Activated T-helper 2 cell treated with anti-CD3 and anti-CD28 coated beads, Interferon-gamma antibody, Interleukin-2, Interleukin-4, amounts not matched to agents 10 μg/mL and 5 μg/mL and 100 μg/mL, durations not matched to agents 14 hours and 24 hours and 36 hours (primary cell): ENCODE measurements at regions of chr1 and their contacts with region 1.

Region 1: GRCh38 chr1:32498751-32499150 is 33.9 kb downstream of the ZBTB8B start:
- DNase-seq: no peak
- H3K4me3 Mint-ChIP-seq: peak overlapping the region; percentile 17
- H3K27ac Mint-ChIP-seq: no peak overlapping the region
- H3K4me1 Mint-ChIP-seq: peaks cover 7% of the 10 kb centered on the region
- H3K27me3 Mint-ChIP-seq: peaks cover 42% of the 10 kb centered on the region

Region 2: DNA sequence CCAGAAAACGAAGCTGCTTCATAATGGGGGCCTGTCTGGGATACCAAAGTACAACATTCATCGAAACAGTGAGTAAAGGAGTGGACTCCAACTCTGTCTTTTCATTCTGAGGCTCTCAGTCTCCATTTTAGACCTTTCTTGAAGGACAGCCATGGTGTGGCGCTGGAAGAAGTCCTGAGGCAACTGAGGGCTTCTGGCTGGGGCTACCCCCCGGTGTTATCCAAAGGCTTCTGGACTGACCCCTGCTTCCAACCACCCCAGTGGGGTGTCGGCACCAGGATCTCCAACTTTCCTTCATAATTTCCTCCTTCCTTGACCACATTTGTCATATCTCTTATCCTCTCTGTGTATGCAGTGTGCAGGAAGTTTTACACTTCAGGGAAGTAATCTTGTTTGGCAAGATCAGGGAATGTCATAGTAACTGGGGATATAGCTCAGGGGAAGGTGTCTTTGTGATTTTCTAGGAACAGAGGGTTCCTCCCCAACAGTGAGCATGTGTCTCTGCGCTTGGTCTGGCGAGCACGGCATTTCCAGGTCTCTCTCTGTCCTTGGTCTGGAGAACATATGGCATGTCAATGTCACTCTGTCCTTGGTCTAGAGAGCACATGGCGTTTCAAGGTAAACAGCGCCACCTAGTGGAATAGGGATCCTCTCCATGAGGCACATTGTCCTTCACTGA is 85.1 kb before region 1 on chr1:
- intact Hi-C with region 1: no loop called
- DNase-seq: peak; percentile 63
- H3K4me3 Mint-ChIP-seq: no peak overlapping the region
- H3K27ac Mint-ChIP-seq: peak overlapping the region; percentile 26
- H3K4me1 Mint-ChIP-seq: peaks cover 3% of the 10 kb centered on the region
- H3K27me3 Mint-ChIP-seq: peaks cover 13% of the 10 kb centered on the region

Region 3: GRCh38 chr1:32464716-32465577 is 33.8 kb before region 1 on chr1 and contains the start of gene ZBTB8B:
- intact Hi-C with region 1: loop called (anchors 1 kb)
- DNase-seq: no peak
- H3K4me3 Mint-ChIP-seq: peak within 1 kb of the TSS; percentile 70
- H3K27ac Mint-ChIP-seq: no peak within 1 kb of the TSS
- H3K4me1 Mint-ChIP-seq: peaks cover 9% of the 10 kb centered on the region
- H3K27me3 Mint-ChIP-seq: peaks cover 45% of the 10 kb centered on the region
- total RNA-seq, gene ZBTB8B: 0.02 TPM in 1 of 2 replicates, not detected in the other

Region 4: DNA sequence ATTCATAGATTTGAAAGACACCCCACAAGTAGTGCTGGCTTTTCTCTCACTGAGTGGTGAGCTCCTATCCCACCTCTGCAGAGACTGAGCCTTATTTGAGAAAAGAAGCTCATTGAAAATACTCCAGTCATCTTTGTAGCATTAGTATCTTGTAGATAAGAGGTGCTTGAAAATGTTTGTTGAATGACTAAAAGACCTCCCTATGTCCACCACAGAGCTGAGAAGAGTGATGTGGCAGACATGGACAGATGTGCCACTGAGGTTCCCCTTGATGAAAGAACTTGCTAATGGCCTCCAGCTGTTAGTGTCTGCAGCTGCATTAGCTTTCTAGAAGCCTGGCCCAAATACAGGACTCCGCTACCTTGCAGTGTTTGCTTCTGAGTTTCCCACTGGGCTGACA is 11.2 kb after region 1 on chr1:
- intact Hi-C with region 1: no loop called
- DNase-seq: no peak
- H3K4me3 Mint-ChIP-seq: no peak overlapping the region
- H3K27ac Mint-ChIP-seq: no peak overlapping the region
- H3K4me1 Mint-ChIP-seq: no peaks in the 10 kb centered on the region
- H3K27me3 Mint-ChIP-seq: peaks cover 28% of the 10 kb centered on the region

Region 5: GRCh38 chr1:32627596-32628162 is 128.9 kb after region 1 on chr1:
- intact Hi-C with region 1: no loop called
- DNase-seq: no peak
- H3K4me3 Mint-ChIP-seq: peak overlapping the region; percentile 37
- H3K27ac Mint-ChIP-seq: peak overlapping the region; percentile 78
- H3K4me1 Mint-ChIP-seq: peaks cover 30% of the 10 kb centered on the region
- H3K27me3 Mint-ChIP-seq: no peaks in the 10 kb centered on the region